ENCODE measurements at regions of chr6 and their contacts with region 1.

Region 1: GRCh38 chr6:16332175-16332542 is 93.8 kb downstream of the GMPR start:
- DNase-seq: peak; percentile 88
- ATAC-seq: peak; percentile 95
- H3K4me3 ChIP-seq: peak overlapping the region in 1 of 5 experiments; percentile 31
- H3K4me3 Mint-ChIP-seq: no peak overlapping the region
- H3K27ac ChIP-seq: peak overlapping the region; percentile 60 to 67
- H3K27ac Mint-ChIP-seq: no peak overlapping the region
- H3K4me1 ChIP-seq: peaks cover 12% of the 10 kb centered on the region in 2 donors
- H3K4me1 Mint-ChIP-seq: peaks cover 9% of the 10 kb centered on the region
- H3K27me3 ChIP-seq: no peaks in the 10 kb centered on the region
- H3K27me3 Mint-ChIP-seq: no peaks in the 10 kb centered on the region
- CTCF ChIP-seq: peak; percentile 85

Region 2: DNA sequence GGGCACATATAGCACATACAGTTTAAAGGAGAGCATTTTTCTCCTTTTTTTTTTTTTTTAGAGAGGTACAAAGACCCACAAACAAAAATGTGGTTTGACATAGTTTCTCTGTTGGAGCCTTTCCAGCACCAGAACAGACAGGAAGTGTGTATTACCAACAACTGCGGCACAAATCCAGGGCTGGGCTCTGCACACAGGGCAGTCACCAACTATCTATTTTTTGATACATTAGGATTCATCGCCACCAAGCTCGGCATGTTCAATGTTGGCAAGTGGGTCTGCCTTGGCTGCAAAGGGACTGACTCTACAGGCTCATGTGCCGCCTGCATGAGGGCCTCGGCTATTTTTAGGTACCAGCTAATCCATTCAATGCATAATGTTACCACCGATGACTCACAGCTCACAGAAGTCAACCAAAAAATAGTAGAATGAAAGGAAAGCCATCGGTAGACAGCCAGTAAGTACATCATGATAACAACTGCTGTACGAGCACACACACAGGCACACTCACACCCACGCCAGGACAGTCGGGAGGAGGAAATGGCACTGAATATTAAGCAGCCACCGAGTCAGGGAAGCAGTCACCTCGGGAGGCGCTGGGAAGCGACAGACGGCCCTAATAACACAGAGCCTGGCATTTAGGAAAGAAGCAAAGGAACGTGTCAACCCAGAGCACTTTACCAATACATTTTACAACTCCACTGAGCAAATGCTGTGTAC is 12.2 kb before region 1 on chr6:
- CTCF ChIA-PET with region 1: interaction called, 87 read pairs
- POLR2A ChIA-PET with region 1: interaction called, 3 read pairs
- intact Hi-C with region 1: loop called (anchors 2 kb)
- DNase-seq: peak; percentile 52
- ATAC-seq: peak; percentile 57
- H3K4me3 ChIP-seq: peak overlapping the region in 1 of 5 experiments; percentile 33
- H3K4me3 Mint-ChIP-seq: peak overlapping the region; percentile 53
- H3K27ac ChIP-seq: peak overlapping the region; percentile 6 to 23
- H3K27ac Mint-ChIP-seq: peak overlapping the region; percentile 62
- H3K4me1 ChIP-seq: peaks cover 17 to 34% of the 10 kb centered on the region in 2 donors
- H3K4me1 Mint-ChIP-seq: peaks cover 44% of the 10 kb centered on the region
- H3K27me3 ChIP-seq: no peaks in the 10 kb centered on the region
- H3K27me3 Mint-ChIP-seq: no peaks in the 10 kb centered on the region
- CTCF ChIP-seq: no peak

Region 3: GRCh38 chr6:16420715-16421461 is 88.7 kb after region 1 on chr6:
- CTCF ChIA-PET with region 1: interaction called, 22 read pairs
- POLR2A ChIA-PET with region 1: no interaction called
- intact Hi-C with region 1: loop called (anchors 5 kb)
- DNase-seq: peak; percentile 85
- ATAC-seq: peak; percentile 65
- H3K4me3 ChIP-seq: peak overlapping the region in 1 of 5 experiments; percentile 31
- H3K4me3 Mint-ChIP-seq: peak overlapping the region; percentile 79
- H3K27ac ChIP-seq: peak overlapping the region; percentile 87 to 93
- H3K27ac Mint-ChIP-seq: peak overlapping the region; percentile 100
- H3K4me1 ChIP-seq: peaks cover 20 to 37% of the 10 kb centered on the region in 2 donors
- H3K4me1 Mint-ChIP-seq: peaks cover 47% of the 10 kb centered on the region
- H3K27me3 ChIP-seq: no peaks in the 10 kb centered on the region
- H3K27me3 Mint-ChIP-seq: no peaks in the 10 kb centered on the region
- CTCF ChIP-seq: no peak

Region 4: GRCh38 chr6:16591396-16592222 is 259.4 kb after region 1 on chr6:
- CTCF ChIA-PET with region 1: interaction called, 3 read pairs
- POLR2A ChIA-PET with region 1: no interaction called
- intact Hi-C with region 1: loop called (anchors 10 kb)
- DNase-seq: peak; percentile 53
- ATAC-seq: peak; percentile 72
- H3K4me3 ChIP-seq: no peak overlapping the region
- H3K4me3 Mint-ChIP-seq: peak overlapping the region; percentile 72
- H3K27ac ChIP-seq: peak overlapping the region; percentile 7 to 56
- H3K27ac Mint-ChIP-seq: peak overlapping the region; percentile 60
- H3K4me1 ChIP-seq: peaks cover 19 to 30% of the 10 kb centered on the region in 2 donors
- H3K4me1 Mint-ChIP-seq: peaks cover 55% of the 10 kb centered on the region
- H3K27me3 ChIP-seq: no peaks in the 10 kb centered on the region
- H3K27me3 Mint-ChIP-seq: no peaks in the 10 kb centered on the region
- CTCF ChIP-seq: no peak

Region 5: GRCh38 chr6:16770701-16771569 is 438.8 kb after region 1 on chr6:
- CTCF ChIA-PET with region 1: interaction called, 30 read pairs
- POLR2A ChIA-PET with region 1: interaction called, 4 read pairs
- intact Hi-C with region 1: loop called (anchors 1 kb)
- DNase-seq: peak; percentile 81
- ATAC-seq: peak; percentile 97
- H3K4me3 ChIP-seq: no peak overlapping the region
- H3K4me3 Mint-ChIP-seq: no peak overlapping the region
- H3K27ac ChIP-seq: no peak overlapping the region
- H3K27ac Mint-ChIP-seq: no peak overlapping the region
- H3K4me1 ChIP-seq: peaks cover 4 to 11% of the 10 kb centered on the region in 2 donors
- H3K4me1 Mint-ChIP-seq: peaks cover 19% of the 10 kb centered on the region
- H3K27me3 ChIP-seq: peaks cover 0 to 4% (median 0%) of the 10 kb centered on the region in 4 experiments
- H3K27me3 Mint-ChIP-seq: peaks cover 8% of the 10 kb centered on the region
- CTCF ChIP-seq: peak; percentile 97

Region 6: GRCh38 chr6:17233531-17233930 is 901.4 kb after region 1 on chr6:
- CTCF ChIA-PET with region 1: no interaction called
- POLR2A ChIA-PET with region 1: no interaction called
- intact Hi-C with region 1: no loop called
- DNase-seq: no peak
- ATAC-seq: no peak
- H3K4me3 ChIP-seq: no peak overlapping the region
- H3K4me3 Mint-ChIP-seq: no peak overlapping the region
- H3K27ac ChIP-seq: no peak overlapping the region
- H3K27ac Mint-ChIP-seq: no peak overlapping the region
- H3K4me1 ChIP-seq: no peaks in the 10 kb centered on the region
- H3K4me1 Mint-ChIP-seq: no peaks in the 10 kb centered on the region
- H3K27me3 ChIP-seq: no peaks in the 10 kb centered on the region
- H3K27me3 Mint-ChIP-seq: peaks cover 3% of the 10 kb centered on the region
- CTCF ChIP-seq: no peak